BJ (cell line): ENCODE measurements at regions of chr6 and their contacts with region 1.

Region 1: DNA sequence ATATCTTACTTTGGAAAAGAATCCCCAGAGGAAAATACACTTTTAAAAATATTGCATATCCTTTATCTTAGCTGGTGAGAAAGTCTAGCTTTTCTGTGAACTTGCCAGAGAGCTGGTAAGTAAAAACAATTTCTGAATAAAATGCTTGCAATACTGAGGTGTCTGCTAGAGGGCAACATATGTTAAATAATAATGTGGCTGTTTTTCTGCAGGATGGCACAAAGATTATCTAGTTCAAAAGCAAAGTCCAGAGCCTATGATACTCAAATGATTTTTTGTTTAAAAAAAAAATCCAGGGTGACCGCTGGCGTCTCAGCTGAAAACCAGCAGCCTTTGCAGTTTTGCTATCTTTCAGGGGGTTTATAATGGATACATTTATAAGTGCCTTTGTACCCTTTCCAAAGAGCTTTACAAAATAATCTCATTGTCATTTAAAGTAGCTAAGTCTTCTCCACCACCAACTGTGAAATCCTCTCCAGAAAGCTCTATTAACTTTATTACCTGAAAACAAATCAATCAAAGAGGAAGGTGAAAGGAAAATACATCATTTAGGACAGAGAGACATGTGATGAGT is 194.9 kb downstream of the PHACTR1 start:
- DNase-seq: peak; percentile 10
- H3K4me3 ChIP-seq: no peak overlapping the region
- H3K27me3 ChIP-seq: peaks cover 2% of the 10 kb centered on the region; the same call in 1 of the 2 replicates
- CTCF ChIP-seq: peak; percentile 59

Region 2: DNA sequence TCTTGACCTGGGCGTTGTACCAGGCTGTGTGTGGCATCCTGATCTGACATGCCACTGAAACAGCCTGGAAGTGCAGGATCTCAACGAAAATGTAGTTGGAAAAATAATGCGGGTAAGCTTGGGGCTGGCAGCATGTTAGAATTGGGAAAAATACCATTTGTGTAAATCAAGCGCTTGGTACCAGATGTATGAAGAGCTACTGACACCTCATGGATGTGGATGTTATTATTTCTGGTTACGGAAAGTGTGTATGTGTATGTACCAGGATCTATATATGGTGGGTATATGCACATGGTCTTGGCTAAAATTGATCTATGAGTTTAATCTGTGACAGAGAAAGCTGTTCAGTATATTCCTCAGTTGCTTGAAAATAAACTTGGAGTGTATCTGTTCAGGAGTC is 876.6 kb before region 1 on chr6:
- CTCF ChIA-PET with region 1: interaction called, 10 read pairs
- POLR2A ChIA-PET with region 1: no interaction called
- DNase-seq: no peak
- H3K4me3 ChIP-seq: no peak overlapping the region
- H3K27me3 ChIP-seq: no peaks in the 10 kb centered on the region
- CTCF ChIP-seq: no peak

Region 3: DNA sequence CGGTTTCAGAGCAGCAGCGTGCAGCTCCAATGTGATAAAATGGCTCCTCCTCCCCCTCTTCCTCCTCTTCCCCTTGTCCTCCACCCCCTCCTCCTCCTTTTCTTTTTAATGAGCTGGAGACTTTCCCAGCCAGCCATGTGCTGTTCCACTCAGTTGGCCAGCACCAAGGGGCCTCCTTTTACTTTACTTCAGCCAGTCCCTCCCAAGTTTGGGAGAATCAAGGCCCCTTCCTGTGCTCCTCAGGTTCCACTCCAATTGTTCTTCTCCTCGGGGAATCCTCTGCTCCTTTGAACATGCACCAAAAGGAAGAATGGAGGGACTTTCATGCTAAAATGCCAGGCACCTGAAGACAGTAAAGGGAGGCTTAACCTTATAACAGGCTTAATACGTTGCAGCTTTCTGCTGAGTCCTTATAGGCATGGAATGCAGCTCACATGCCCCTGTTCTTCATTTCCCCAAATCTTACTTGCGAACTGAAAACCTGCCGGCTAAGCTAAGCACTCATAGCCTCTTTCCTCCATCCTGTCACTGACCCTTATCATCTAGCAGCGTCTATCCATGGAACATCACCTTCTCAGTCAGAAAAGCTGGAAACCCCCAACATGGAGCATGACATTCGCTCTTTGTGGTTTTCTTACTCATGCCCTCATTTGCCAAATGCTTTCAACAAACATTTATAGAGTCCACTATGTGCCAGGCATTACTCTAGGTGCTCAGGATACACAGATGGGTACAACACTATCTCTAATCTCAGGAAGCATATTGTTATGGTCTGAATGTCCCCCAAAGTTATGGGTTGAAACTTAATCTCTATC is 24.3 kb before region 1 on chr6:
- CTCF ChIA-PET with region 1: no interaction called
- POLR2A ChIA-PET with region 1: no interaction called
- DNase-seq: no peak
- H3K4me3 ChIP-seq: no peak overlapping the region
- H3K27me3 ChIP-seq: no peaks in the 10 kb centered on the region; the same call in 1 of the 2 replicates
- CTCF ChIP-seq: no peak

Region 4: GRCh38 chr6:12923644-12924235 is 12.3 kb after region 1 on chr6:
- CTCF ChIA-PET with region 1: interaction called, 30 read pairs
- POLR2A ChIA-PET with region 1: no interaction called
- DNase-seq: no peak
- H3K4me3 ChIP-seq: no peak overlapping the region
- H3K27me3 ChIP-seq: no peaks in the 10 kb centered on the region
- CTCF ChIP-seq: no peak

Region 5: GRCh38 chr6:13217206-13217905 is 305.9 kb after region 1 on chr6:
- CTCF ChIA-PET with region 1: no interaction called
- POLR2A ChIA-PET with region 1: no interaction called
- DNase-seq: no peak
- H3K4me3 ChIP-seq: no peak overlapping the region
- H3K27me3 ChIP-seq: no peaks in the 10 kb centered on the region
- CTCF ChIP-seq: no peak